ENCODE measurements at regions of chr16 and their contacts with region 1.

Region 1: GRCh38 chr16:14109782-14110727 is 38.9 kb downstream of the MRTFB start:
- DNase-seq: no peak
- ATAC-seq: no peak
- H3K4me3 Mint-ChIP-seq: no peak overlapping the region
- H3K27ac Mint-ChIP-seq: no peak overlapping the region
- H3K4me1 Mint-ChIP-seq: peaks cover 41% of the 10 kb centered on the region
- H3K27me3 Mint-ChIP-seq: no peaks in the 10 kb centered on the region

Region 2: GRCh38 chr16:13866073-13866472 is 244.0 kb before region 1 on chr16:
- CTCF ChIA-PET with region 1: no interaction called
- POLR2A ChIA-PET with region 1: no interaction called
- intact Hi-C with region 1: no loop called
- DNase-seq: peak; percentile 76
- ATAC-seq: peak; percentile 84
- H3K4me3 Mint-ChIP-seq: no peak overlapping the region
- H3K27ac Mint-ChIP-seq: no peak overlapping the region
- H3K4me1 Mint-ChIP-seq: no peaks in the 10 kb centered on the region
- H3K27me3 Mint-ChIP-seq: peaks cover 19% of the 10 kb centered on the region

Region 3: GRCh38 chr16:14186007-14186794 is 76.1 kb after region 1 on chr16:
- CTCF ChIA-PET with region 1: no interaction called
- POLR2A ChIA-PET with region 1: no interaction called
- intact Hi-C with region 1: loop called in 1 of 2 experiments (anchors 5 kb)
- DNase-seq: peak; percentile 41
- ATAC-seq: peak; percentile 99
- H3K4me3 Mint-ChIP-seq: peak overlapping the region; percentile 17
- H3K27ac Mint-ChIP-seq: peak overlapping the region; percentile 61
- H3K4me1 Mint-ChIP-seq: peaks cover 29% of the 10 kb centered on the region
- H3K27me3 Mint-ChIP-seq: no peaks in the 10 kb centered on the region